ENCODE measurements at regions of chr3 and their contacts with region 1.

Region 1: DNA sequence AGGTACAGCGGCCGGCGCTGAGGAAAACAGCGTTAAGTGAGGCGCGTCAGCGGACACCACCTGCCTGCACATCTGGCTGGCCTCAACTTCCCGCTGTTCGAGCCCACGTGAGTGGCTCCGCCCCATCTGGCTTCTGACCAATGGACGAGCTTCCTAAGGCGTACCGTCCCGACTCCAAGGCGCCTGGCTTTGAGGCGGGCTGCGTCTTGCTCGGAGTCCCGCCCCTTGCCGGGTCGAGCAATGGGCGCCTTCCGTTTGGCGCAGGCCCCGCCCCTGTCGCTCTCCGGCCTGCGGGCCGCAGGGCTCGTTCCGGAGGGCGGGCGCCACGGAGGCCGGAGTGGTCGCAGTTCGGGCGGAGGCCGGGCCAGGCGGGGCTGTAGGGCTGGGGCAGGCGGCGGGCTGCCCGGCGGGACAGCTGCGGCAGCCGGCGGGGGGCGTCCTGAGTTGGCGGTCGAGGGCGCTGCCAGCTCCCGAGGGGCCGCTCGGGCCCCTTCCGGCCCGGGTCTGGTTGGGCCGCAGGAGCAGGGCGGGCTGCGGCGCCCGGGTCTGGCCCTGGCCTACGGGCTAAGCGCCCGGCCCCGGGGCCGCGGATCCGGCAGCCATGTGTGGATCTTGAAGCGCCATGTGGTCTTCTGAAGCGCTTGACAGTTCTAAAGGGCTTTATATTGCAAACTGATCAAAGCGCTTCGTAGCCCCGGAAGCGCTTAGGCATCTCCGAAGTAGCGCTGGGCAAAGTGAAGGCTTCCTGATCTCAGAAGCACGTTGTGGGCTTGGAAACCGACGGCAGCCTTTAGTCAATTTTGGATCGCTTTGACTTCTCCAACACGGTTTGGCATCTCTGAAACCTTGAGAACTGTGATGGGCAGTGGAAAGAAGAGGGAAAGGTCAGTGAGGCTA is at the start of gene TATDN2:
- DNase-seq: peak; percentile 95
- ATAC-seq: peak; percentile 94
- H3K4me3 ChIP-seq: peak within 1 kb of the TSS; percentile 77 to 95 (median 92)
- H3K27ac ChIP-seq: peak within 1 kb of the TSS; percentile 86
- H3K4me1 ChIP-seq: peaks cover 42% of the 10 kb centered on the region
- H3K27me3 ChIP-seq: no peaks in the 10 kb centered on the region; a peak in 1 of 5 replicates
- CTCF ChIP-seq: peak; percentile 33; the same call in 1 of the 2 replicates
- EP300 ChIP-seq: no peak
- POLR2A ChIP-seq: peak; percentile 38 to 89
- RAD21 ChIP-seq: peak; percentile 27; the same call in 1 of the 2 replicates
- total RNA-seq, gene TATDN2: 21.9 and 23.9 TPM in 2 replicates

Region 2: DNA sequence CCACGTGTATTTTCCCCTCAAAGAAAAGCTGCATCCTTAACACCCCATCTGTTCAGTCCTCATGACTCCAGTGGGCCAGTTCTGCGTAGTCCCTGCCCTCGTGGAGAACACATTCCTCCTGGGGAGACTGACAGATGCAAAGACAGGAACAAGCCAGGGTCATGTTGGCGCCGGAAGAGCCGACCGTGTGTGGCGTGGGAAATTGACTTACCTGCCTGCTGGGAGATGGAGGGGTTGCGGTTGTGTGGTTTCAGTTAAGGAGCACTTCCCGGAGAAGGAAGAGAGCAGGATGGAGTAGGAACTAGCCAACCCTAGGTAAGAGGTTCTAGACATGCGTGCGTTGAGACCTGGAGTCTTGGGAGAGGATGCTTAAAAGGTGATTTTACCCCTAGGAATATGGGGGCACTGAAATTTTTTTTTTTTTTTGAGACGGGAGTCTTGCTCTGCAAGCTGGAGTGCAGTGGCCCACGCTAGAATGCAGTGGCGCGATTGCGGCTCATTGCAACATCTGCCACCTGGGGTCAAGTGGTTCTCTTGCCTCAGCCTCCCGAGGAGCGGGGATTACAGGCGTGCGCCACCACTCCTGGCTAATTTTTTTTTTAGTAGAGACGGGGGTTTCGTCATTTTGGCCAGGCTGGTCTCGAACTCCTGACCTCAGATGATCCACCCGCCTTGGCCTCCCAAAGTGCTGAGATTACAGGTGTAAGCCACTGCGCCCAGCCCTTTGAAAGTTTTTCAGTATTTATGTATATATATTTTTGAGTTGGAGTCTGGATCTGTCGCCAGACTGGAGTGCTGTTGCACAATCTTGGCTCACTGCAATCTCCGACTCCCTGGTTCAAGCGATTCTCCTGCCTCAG is 105.5 kb before region 1 on chr3:
- CTCF ChIA-PET with region 1: no interaction called
- POLR2A ChIA-PET with region 1: interaction called, 10 read pairs
- in situ Hi-C with region 1: no loop called
- intact Hi-C with region 1: no loop called
- DNase-seq: no peak
- ATAC-seq: peak; percentile 23
- H3K4me3 ChIP-seq: peak overlapping the region; percentile 57 to 89 (median 66)
- H3K27ac ChIP-seq: peak overlapping the region; percentile 39
- H3K4me1 ChIP-seq: peaks cover 63% of the 10 kb centered on the region
- H3K27me3 ChIP-seq: no peaks in the 10 kb centered on the region
- CTCF ChIP-seq: no peak
- EP300 ChIP-seq: no peak
- POLR2A ChIP-seq: no peak
- RAD21 ChIP-seq: no peak

Region 3: DNA sequence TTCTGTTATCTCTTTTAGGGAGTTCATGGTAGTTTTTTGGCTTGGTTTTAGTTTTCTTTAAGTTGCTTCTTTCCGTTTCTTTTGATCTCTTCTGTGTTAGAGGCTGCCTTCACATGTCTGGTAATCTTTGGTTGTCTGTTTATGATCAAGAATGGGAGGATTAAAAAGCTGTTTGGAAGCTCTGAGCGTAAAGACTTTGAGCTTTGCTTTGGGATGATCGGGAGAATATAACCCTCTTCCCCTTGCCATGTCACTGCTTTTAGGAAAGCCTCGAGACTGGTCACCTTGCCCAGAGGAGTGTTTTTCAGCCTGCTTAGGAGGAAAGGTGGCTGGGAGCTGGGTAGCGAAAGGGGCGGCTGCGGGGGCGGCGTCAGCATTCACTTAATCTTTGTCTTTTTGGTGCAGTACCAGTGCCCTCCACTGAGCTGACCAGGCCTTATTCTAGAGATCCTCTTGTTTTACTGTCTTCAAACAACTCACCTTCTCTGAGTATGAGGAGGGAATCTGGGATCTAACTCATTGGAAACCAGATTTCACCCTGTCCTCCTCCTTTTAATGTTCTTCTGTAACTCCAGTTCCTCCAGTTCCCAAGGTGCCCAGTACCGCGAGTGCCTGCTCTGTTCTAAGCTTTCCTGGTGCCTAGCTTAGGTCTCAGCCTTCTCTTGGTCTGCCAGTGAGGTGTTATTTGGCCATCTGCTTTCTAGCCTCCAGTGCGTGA is 15.4 kb after region 1 on chr3:
- CTCF ChIA-PET with region 1: no interaction called
- POLR2A ChIA-PET with region 1: interaction called, 16 read pairs
- in situ Hi-C with region 1: no loop called
- intact Hi-C with region 1: no loop called
- DNase-seq: no peak
- ATAC-seq: peak; percentile 96
- H3K4me3 ChIP-seq: no peak overlapping the region
- H3K27ac ChIP-seq: peak overlapping the region; percentile 14
- H3K4me1 ChIP-seq: peaks cover 25% of the 10 kb centered on the region
- H3K27me3 ChIP-seq: no peaks in the 10 kb centered on the region
- CTCF ChIP-seq: peak; percentile 28
- EP300 ChIP-seq: no peak
- POLR2A ChIP-seq: no peak
- RAD21 ChIP-seq: no peak

Region 4: GRCh38 chr3:10764259-10765051 is 516.0 kb after region 1 on chr3:
- CTCF ChIA-PET with region 1: no interaction called
- POLR2A ChIA-PET with region 1: no interaction called
- in situ Hi-C with region 1: no loop called
- intact Hi-C with region 1: no loop called
- DNase-seq: peak; percentile 18
- ATAC-seq: peak; percentile 82
- H3K4me3 ChIP-seq: no peak overlapping the region
- H3K27ac ChIP-seq: no peak overlapping the region
- H3K4me1 ChIP-seq: peaks cover 23% of the 10 kb centered on the region; the same call in 1 of the 2 replicates
- H3K27me3 ChIP-seq: peaks cover 0 to 21% of the 10 kb centered on the region in 2 experiments; a peak in 2 of 5 replicates
- CTCF ChIP-seq: no peak
- EP300 ChIP-seq: no peak
- POLR2A ChIP-seq: no peak
- RAD21 ChIP-seq: no peak